ENCODE measurements at regions of chr9 and their contacts with region 1.

Region 1: GRCh38 chr9:1837449-1838084 is 177.6 kb upstream of the SMARCA2 start:
- DNase-seq: peak; percentile 76
- ATAC-seq: peak; percentile 89
- H3K4me3 Mint-ChIP-seq: no peak overlapping the region
- H3K27ac Mint-ChIP-seq: no peak overlapping the region
- H3K4me1 Mint-ChIP-seq: peaks cover 12% of the 10 kb centered on the region
- H3K27me3 Mint-ChIP-seq: no peaks in the 10 kb centered on the region
- CTCF ChIP-seq: peak; percentile 54

Region 2: DNA sequence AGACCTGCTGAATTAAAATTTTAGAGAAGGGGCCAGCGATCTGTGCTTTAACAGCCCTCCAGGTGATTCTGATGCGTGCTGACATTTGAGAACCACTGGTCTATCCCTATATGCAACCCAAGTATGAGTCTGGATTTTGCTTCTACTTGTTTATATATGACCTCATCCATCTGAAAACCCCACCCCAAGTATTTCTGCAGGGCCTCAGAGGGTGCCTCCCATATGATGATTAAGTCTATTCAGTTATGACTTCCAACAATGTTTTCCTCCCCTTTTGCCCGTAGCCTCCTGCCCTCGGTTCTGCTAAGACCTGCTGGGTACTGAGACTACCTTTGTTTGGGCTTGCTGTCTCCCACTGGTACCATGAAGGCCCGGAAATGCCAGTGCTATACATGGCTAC is 198.4 kb before region 1 on chr9:
- CTCF ChIA-PET with region 1: no interaction called
- POLR2A ChIA-PET with region 1: no interaction called
- DNase-seq: no peak
- ATAC-seq: no peak
- H3K4me3 Mint-ChIP-seq: no peak overlapping the region
- H3K27ac Mint-ChIP-seq: no peak overlapping the region
- H3K4me1 Mint-ChIP-seq: no peaks in the 10 kb centered on the region
- H3K27me3 Mint-ChIP-seq: no peaks in the 10 kb centered on the region
- CTCF ChIP-seq: no peak

Region 3: DNA sequence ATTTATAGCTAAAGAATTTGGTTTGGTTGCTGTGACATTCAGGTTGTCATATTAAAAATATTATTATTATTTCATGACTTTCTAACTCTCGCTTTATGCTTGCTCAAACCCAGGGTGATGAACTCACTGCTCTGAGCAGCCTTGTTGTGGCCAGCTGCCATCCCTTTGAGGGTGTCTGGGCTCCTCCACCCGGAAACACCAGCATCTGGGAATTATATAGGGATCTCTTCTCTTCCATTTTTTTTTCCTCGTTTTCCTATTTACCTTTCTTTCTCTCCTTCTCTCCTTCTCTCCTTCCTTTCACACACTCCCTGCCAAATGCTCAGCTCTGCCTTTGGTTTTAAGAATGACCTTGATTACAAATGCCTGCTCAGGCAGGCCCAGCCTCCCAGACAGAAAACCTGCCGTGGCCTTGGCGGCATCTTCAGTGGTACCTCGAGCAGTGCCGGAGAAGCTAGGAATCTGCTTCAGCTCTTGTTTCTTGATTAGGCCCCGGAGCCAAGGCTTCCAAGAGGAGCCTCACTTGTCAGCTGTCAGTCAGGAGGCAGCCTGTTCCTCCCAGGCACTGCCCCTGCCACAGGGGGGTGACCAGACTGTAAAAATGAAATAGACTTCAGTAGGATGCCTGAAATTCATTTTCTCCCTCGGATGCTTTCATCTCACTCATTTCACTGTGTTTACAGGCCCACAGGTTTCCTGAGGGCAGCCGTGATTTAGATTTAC is 178.0 kb before region 1 on chr9:
- CTCF ChIA-PET with region 1: no interaction called
- POLR2A ChIA-PET with region 1: no interaction called
- DNase-seq: no peak
- ATAC-seq: no peak
- H3K4me3 Mint-ChIP-seq: no peak overlapping the region
- H3K27ac Mint-ChIP-seq: no peak overlapping the region
- H3K4me1 Mint-ChIP-seq: no peaks in the 10 kb centered on the region
- H3K27me3 Mint-ChIP-seq: no peaks in the 10 kb centered on the region
- CTCF ChIP-seq: no peak

Region 4: DNA sequence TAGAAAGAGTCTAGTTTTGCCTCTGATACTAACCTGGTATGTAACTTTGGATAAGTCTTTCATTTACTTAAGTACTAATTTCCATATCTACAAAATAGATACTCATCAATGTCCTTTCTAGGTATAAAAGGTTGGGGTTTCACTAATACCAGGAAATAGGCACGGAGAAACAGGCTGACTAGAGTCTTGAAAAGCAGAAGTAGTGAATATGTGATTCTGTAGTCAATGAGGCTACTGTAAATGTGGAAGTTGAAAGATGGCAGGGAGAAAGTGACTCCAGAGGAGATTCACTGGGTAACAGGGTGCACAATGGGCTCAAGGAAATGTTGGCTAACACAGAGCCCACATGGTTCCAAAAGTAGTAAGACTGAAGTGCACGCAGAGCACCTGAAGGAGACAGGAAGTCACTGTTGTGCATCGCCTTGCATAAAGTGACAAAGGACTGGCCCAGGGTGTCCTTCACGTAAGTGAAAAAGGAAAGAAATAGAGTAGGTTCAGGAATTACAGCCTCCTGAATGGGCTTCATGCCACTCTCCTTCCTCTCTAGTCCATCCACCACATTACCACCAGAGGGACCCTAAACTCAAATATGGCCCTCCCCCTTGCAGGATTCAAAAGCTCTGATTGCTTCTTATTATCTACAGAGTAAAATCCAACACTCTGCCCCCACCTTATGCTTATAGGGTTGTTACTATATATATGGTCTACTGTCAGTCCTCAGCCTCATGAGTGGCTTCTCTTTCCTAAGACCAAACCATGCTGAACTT is 110.4 kb before region 1 on chr9:
- CTCF ChIA-PET with region 1: interaction called, 30 read pairs
- POLR2A ChIA-PET with region 1: interaction called, 3 read pairs
- DNase-seq: peak; percentile 22
- ATAC-seq: peak; percentile 84
- H3K4me3 Mint-ChIP-seq: no peak overlapping the region
- H3K27ac Mint-ChIP-seq: no peak overlapping the region
- H3K4me1 Mint-ChIP-seq: peaks cover 17% of the 10 kb centered on the region
- H3K27me3 Mint-ChIP-seq: peaks cover 3% of the 10 kb centered on the region
- CTCF ChIP-seq: no peak

Region 5: GRCh38 chr9:1869843-1870242 is 32.3 kb after region 1 on chr9:
- CTCF ChIA-PET with region 1: interaction called, 11 read pairs
- POLR2A ChIA-PET with region 1: no interaction called
- DNase-seq: peak; percentile 66
- ATAC-seq: peak; percentile 91
- H3K4me3 Mint-ChIP-seq: no peak overlapping the region
- H3K27ac Mint-ChIP-seq: no peak overlapping the region
- H3K4me1 Mint-ChIP-seq: peaks cover 18% of the 10 kb centered on the region
- H3K27me3 Mint-ChIP-seq: no peaks in the 10 kb centered on the region
- CTCF ChIP-seq: peak; percentile 58; the same call in 1 of the 2 replicates

Region 6: GRCh38 chr9:1895946-1896345 is 58.4 kb after region 1 on chr9:
- CTCF ChIA-PET with region 1: no interaction called
- POLR2A ChIA-PET with region 1: no interaction called
- DNase-seq: no peak
- ATAC-seq: no peak
- H3K4me3 Mint-ChIP-seq: no peak overlapping the region
- H3K27ac Mint-ChIP-seq: no peak overlapping the region
- H3K4me1 Mint-ChIP-seq: no peaks in the 10 kb centered on the region
- H3K27me3 Mint-ChIP-seq: peaks cover under 1% of the 10 kb centered on the region; the same call in 1 of the 2 replicates
- CTCF ChIP-seq: no peak

Region 7: GRCh38 chr9:1960342-1961042 is 122.9 kb after region 1 on chr9:
- CTCF ChIA-PET with region 1: no interaction called
- POLR2A ChIA-PET with region 1: no interaction called
- DNase-seq: no peak
- ATAC-seq: no peak
- H3K4me3 Mint-ChIP-seq: no peak overlapping the region
- H3K27ac Mint-ChIP-seq: peak overlapping the region; percentile 54; the same call in 1 of the 2 replicates
- H3K4me1 Mint-ChIP-seq: peaks cover 12% of the 10 kb centered on the region
- H3K27me3 Mint-ChIP-seq: no peaks in the 10 kb centered on the region; the same call in 1 of the 2 replicates
- CTCF ChIP-seq: no peak